Mammary epithelial cell (primary cell): ENCODE measurements at regions of chr3 and their contacts with region 1.

Region 1: DNA sequence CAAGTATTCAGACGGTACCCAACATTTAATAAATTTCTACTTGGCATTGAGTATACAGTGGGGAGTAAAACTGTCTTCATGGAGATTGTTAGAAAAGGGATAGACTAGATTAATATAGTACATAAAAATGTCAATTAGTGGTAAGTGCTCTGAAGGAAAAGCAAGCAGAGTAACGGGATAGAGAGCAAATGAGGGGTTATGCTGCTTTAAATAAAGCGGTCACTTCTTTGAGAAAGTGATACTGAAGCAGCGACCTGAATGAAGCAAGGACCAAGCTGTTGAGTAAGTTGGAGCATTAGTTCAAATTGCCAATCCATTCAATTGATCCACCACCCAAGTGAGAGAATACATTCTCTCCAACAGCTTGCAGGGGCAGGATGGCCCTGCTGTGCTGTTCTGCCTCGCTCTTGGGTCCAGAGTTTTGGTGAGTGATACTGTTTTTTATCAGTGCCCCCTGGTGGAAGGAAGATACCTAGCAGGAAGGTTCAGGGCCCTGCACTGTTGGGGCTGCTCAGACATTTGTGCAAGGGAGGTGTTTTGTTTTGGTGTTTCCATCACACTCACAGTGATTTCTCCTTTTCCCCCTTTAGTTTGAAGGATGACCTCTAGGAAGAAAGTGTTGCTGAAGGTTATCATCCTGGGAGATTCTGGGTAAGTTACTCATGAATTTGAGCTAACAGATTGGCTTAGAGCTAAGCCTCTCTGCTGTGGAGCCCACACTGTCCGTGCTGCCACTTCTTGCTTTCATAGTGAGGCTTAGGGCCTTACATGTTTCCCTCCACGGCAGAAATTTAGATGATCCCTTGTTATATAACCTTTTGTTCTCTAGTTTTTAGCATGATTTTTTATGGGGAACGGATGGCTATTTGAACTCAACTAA is 69.0 kb downstream of the RAB7A start:
- DNase-seq: peak; percentile 54
- H3K4me3 ChIP-seq: peak overlapping the region in 1 of 3 experiments; percentile 0
- H3K27ac ChIP-seq: peak overlapping the region; percentile 45
- H3K4me1 ChIP-seq: peaks cover 22% of the 10 kb centered on the region
- H3K27me3 ChIP-seq: no peaks in the 10 kb centered on the region
- CTCF ChIP-seq: peak; percentile 79 to 80

Region 2: GRCh38 chr3:128524374-128525299 is 270.4 kb before region 1 on chr3:
- CTCF ChIA-PET with region 1: interaction called, 22 read pairs
- dilution Hi-C with region 1: no loop called
- in situ Hi-C with region 1: no loop called
- intact Hi-C with region 1: no loop called
- DNase-seq: no peak
- H3K4me3 ChIP-seq: no peak overlapping the region
- H3K27ac ChIP-seq: no peak overlapping the region
- H3K4me1 ChIP-seq: no peaks in the 10 kb centered on the region
- H3K27me3 ChIP-seq: peaks cover 3% of the 10 kb centered on the region
- CTCF ChIP-seq: no peak

Region 3: DNA sequence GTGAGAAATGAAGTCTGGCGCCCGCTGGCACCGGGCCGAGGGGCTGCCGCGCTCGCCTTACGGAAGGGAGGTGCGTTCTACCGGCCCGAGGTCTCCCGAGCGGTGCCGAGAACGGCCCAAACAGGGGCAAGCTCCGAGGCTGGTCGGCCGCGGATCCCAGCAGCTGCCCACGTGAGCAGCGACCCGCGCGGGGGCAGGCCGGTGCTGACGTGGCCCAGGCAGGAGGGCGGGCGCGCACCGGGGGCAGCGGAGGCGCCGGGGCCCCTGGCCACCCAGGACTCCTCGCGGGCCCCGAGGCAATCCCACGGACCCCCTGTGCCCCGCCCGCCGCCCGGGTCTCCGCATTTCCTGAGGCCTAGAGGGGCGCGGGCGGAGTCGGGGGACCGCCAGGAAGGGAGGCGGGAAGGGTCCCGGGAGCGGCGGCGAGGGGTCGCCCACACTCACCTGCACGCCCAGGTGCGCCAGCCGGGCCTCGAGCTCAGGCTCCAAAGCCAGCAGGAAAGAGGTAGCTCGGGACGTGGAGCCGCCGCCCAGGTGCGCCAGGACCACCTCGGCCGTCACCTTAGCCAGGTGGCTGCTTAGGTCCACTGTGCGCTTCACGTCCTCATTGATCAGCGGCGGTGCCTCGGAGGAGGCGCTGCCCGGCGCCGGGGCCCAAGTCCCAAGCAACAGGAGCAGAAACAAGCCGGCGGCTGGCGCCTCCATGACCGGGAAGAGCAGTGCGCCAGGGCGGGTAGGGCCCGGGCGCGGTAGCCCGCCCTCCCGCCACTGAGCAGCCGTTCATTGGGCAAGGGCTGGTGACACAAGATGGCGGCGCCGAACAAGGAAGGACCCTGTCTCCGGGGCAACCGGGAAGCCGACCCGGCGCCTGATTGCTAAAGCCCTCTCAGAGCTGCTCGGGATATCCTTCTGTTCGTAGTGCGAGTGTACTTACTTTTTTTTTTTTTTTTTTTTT is 144.6 kb before region 1 on chr3 and contains the start of gene RPN1:
- CTCF ChIA-PET with region 1: no interaction called
- dilution Hi-C with region 1: no loop called
- in situ Hi-C with region 1: no loop called
- intact Hi-C with region 1: loop called (anchors 1 kb)
- DNase-seq: peak; percentile 90
- H3K4me3 ChIP-seq: peak within 1 kb of the TSS; percentile 90 to 100 (median 100)
- H3K27ac ChIP-seq: peak within 1 kb of the TSS; percentile 95
- H3K4me1 ChIP-seq: peaks cover 6% of the 10 kb centered on the region
- H3K27me3 ChIP-seq: no peaks in the 10 kb centered on the region
- CTCF ChIP-seq: no peak
- total RNA-seq, gene RPN1: 206 to 305 TPM

Region 4: GRCh38 chr3:128725932-128726690 is 68.9 kb before region 1 on chr3 and contains the start of gene RAB7A:
- CTCF ChIA-PET with region 1: interaction called, 4 read pairs
- dilution Hi-C with region 1: loop called (anchors 5 kb)
- in situ Hi-C with region 1: no loop called
- intact Hi-C with region 1: loop called (anchors 1 kb)
- DNase-seq: peak; percentile 97
- H3K4me3 ChIP-seq: peak within 1 kb of the TSS; percentile 80 to 100 (median 85)
- H3K27ac ChIP-seq: peak within 1 kb of the TSS; percentile 98
- H3K4me1 ChIP-seq: peaks cover 15% of the 10 kb centered on the region
- H3K27me3 ChIP-seq: no peaks in the 10 kb centered on the region
- CTCF ChIP-seq: no peak
- total RNA-seq, gene RAB7A: 76.7 to 352 TPM

Region 5: GRCh38 chr3:128734523-128735189 is 60.4 kb before region 1 on chr3:
- CTCF ChIA-PET with region 1: no interaction called
- dilution Hi-C with region 1: loop called (anchors 5 kb)
- in situ Hi-C with region 1: no loop called
- intact Hi-C with region 1: no loop called
- DNase-seq: no peak
- H3K4me3 ChIP-seq: no peak overlapping the region
- H3K27ac ChIP-seq: no peak overlapping the region
- H3K4me1 ChIP-seq: peaks cover 25% of the 10 kb centered on the region
- H3K27me3 ChIP-seq: no peaks in the 10 kb centered on the region
- CTCF ChIP-seq: no peak